Prostate gland (tissue), 2 donors: ENCODE measurements at regions of chr21 and their contacts with region 1.

Region 1: DNA sequence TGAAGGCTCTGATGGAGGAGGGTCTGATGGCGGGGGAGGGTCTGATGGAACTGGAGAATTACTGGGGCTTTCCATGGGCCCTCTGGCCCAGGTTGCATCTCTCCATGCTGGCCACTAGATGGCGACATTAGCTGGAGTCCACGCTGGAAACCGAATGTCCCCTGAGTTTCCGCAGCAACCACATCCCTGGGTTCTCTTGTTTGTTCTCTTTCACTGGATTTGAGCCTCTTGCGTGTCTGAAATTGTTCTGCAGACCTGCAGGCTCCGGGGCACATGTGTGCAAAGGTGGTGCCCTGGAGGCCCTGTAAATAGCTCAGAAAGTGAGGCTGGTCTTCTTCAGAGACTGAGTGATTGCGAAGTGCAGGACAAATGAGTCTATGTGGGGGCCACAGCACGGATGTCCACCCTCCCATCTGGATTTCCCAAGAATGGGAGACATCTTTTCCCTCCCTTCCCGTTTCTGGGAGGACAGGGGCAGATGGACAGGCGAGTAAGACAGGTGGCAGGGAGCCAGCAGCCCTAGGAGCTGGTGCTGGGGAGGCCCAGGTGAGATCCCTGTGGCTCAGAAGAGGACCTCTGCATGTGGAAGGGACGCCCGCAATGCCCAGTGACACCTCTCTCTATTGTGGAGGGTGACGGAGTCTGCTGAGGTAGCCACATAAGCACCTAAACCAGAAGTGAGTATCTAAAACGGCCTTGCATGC is 73.2 kb upstream of the ABCG1 start:
- DNase-seq: peak; percentile 54
- H3K4me3 ChIP-seq: no peak overlapping the region
- H3K27ac ChIP-seq: no peak overlapping the region
- H3K4me1 ChIP-seq: no peaks in the 10 kb centered on the region
- H3K27me3 ChIP-seq: no peaks in the 10 kb centered on the region
- CTCF ChIP-seq: peak; percentile 89 to 94 (median 93)
- POLR2A ChIP-seq: no peak

Region 2: GRCh38 chr21:42107881-42108553 is 37.7 kb before region 1 on chr21:
- intact Hi-C with region 1: no loop called
- DNase-seq: peak; percentile 64
- H3K4me3 ChIP-seq: no peak overlapping the region
- H3K27ac ChIP-seq: no peak overlapping the region
- H3K4me1 ChIP-seq: no peaks in the 10 kb centered on the region
- H3K27me3 ChIP-seq: no peaks in the 10 kb centered on the region
- CTCF ChIP-seq: peak in 3 of 4 experiments; percentile 47 to 88 (median 62)
- POLR2A ChIP-seq: no peak

Region 3: GRCh38 chr21:42209819-42210479 is 64.2 kb after region 1 on chr21:
- intact Hi-C with region 1: no loop called
- DNase-seq: no peak
- H3K4me3 ChIP-seq: no peak overlapping the region
- H3K27ac ChIP-seq: no peak overlapping the region
- H3K4me1 ChIP-seq: no peaks in the 10 kb centered on the region
- H3K27me3 ChIP-seq: no peaks in the 10 kb centered on the region
- CTCF ChIP-seq: no peak
- POLR2A ChIP-seq: no peak

Region 4: GRCh38 chr21:42258153-42258884 is 112.6 kb after region 1 on chr21:
- intact Hi-C with region 1: loop called (anchors 2 kb)
- DNase-seq: peak; percentile 30
- H3K4me3 ChIP-seq: no peak overlapping the region
- H3K27ac ChIP-seq: no peak overlapping the region
- H3K4me1 ChIP-seq: peaks cover 11% of the 10 kb centered on the region
- H3K27me3 ChIP-seq: no peaks in the 10 kb centered on the region
- CTCF ChIP-seq: peak; percentile 41 to 76 (median 55)
- POLR2A ChIP-seq: no peak

Region 5: GRCh38 chr21:42449296-42449927 is 303.7 kb after region 1 on chr21:
- intact Hi-C with region 1: loop called (anchors 5 kb)
- DNase-seq: no peak
- H3K4me3 ChIP-seq: no peak overlapping the region
- H3K27ac ChIP-seq: no peak overlapping the region
- H3K4me1 ChIP-seq: no peaks in the 10 kb centered on the region
- H3K27me3 ChIP-seq: no peaks in the 10 kb centered on the region
- CTCF ChIP-seq: no peak
- POLR2A ChIP-seq: no peak

Region 6: DNA sequence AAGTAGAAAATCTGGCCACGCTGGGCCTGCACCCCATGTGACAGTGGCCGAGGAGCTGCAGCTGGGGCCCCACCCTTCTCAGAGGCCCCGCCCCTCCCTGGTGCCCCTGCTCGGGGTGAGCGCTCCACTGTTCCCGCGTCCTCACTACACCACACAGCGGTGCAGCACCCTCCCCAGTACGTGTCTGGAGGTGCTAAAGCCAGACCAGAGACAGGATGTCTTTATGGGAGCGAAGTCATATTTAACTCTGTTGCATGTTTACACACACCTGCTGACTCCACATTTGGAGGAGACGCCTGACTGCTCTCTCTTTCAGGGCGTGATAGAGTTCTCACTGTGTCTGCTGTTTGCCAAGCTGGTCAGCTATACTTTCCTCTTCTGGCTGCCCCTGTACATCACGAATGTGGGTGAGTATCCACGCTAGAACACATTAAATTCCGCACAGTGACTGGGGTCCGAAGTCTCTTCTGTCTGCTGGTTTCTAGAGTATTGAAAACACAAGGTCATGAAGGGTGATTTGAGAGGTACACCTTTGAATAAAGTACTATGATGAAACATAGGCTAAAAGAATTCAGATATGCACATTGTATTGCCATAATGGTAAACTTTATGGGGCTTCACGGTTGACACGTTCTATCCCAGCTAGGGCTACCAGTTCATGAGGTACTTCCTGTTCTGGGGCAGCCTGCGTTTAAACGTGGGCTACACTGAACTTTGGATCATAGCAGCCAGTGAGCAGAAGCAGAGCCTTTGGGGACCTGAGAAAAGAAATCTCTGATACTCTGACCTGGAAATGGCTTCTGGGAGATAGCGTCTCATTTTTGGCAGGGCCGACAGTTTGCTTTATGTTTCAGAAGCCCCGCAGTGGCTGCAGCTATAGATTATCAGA is 416.3 kb after region 1 on chr21:
- intact Hi-C with region 1: loop called (anchors 10 kb)
- DNase-seq: peak; percentile 71
- H3K4me3 ChIP-seq: no peak overlapping the region
- H3K27ac ChIP-seq: peak overlapping the region; percentile 45 to 63
- H3K4me1 ChIP-seq: peaks cover 2% of the 10 kb centered on the region
- H3K27me3 ChIP-seq: no peaks in the 10 kb centered on the region
- CTCF ChIP-seq: peak in 1 of 4 experiments; percentile 31
- POLR2A ChIP-seq: no peak